Spleen (tissue), 13 donors: ENCODE measurements at regions of chr1 and their contacts with region 1.

Region 1: DNA sequence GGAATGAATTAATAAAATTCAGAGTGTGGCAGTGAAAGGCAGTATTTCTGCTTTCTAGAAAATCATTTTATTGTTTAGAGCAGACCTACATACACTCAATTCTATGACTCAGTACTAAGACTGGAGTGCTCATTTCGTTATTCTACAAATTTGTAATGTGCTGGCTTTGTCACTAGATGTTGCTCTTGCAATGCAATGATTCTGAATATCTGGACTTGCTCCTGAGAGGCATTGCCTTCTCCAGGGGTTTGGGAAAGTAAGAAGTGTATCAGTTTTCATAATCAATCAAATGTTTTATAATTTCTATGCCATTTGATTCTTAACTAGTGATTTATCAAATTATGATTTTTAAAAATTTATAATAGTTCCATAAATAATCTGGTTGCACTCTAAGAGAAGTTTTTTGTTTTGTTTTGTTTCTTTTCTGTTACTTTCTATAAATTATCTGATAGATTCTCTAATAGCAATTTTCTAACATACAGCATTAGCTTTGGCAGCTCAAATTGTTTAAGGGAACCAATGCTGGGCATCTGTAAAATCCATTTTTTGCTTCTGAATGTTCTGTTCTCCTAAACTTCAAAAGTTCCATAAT is 280.5 kb upstream of the SGIP1 start:
- DNase-seq: no peak
- H3K4me3 ChIP-seq: no peak overlapping the region
- H3K27ac ChIP-seq: no peak overlapping the region
- H3K4me1 ChIP-seq: peaks cover 0 to 52% (median 16%) of the 10 kb centered on the region in 6 donors
- H3K27me3 ChIP-seq: no peaks in the 10 kb centered on the region
- CTCF ChIP-seq: peak; percentile 23 to 81 (median 65)
- POLR2A ChIP-seq: no peak

Region 2: DNA sequence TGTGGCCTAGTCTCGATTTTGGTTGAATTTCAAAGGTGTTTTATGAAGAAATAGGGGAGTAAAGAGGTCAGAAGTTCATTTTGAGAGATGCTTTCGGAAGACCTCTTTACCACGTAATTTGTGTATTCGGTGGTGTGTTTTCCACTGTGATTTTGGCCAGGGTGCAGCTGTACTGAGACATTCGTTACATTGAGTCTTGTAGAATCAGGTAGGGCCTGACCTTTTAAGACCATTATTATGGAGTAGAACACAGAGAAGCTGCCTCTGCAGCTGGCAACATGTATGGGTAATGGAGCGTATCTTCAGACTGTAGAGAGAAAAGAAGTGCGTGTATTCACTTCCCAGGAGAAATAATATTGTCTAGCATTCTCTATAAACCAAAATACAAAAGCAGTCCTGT is 134.3 kb before region 1 on chr1:
- intact Hi-C with region 1: no loop called
- DNase-seq: no peak
- H3K4me3 ChIP-seq: no peak overlapping the region
- H3K27ac ChIP-seq: no peak overlapping the region
- H3K4me1 ChIP-seq: no peaks in the 10 kb centered on the region
- H3K27me3 ChIP-seq: no peaks in the 10 kb centered on the region
- CTCF ChIP-seq: no peak
- POLR2A ChIP-seq: no peak

Region 3: DNA sequence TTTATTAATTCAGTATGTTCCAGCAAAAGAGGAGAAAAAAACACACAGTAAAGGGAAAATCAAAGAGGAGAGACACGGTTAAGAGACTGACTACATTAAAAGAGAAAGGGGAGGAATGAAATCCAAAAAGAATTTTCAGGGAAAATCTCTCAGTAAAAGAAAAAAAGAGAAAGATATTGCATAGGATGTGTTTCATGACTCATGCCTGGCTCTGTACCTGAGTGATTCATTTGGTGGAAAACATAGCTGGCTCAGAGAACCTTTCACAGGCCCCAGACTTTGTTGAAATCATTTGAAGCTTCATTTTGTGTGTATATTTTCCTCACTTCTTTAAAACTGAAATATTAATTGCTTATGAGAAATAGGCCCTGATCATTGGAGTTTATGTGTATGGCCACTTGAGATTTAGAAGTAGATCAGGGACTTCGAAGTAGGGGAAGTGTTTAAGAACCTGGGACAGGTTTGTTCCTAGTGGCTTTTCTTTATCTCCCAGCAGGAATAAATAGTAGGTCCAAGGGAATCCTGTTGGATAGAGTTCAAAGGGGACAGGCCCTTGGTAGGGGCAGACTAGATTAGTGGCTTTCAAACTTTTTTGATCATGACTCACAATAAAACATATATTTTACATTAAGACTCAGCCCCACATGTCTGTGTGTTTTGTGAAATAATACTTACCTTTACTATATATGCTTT is 41.4 kb after region 1 on chr1:
- intact Hi-C with region 1: no loop called
- DNase-seq: no peak
- H3K4me3 ChIP-seq: no peak overlapping the region
- H3K27ac ChIP-seq: no peak overlapping the region
- H3K4me1 ChIP-seq: peaks cover 0 to 35% (median 6%) of the 10 kb centered on the region in 6 donors
- H3K27me3 ChIP-seq: no peaks in the 10 kb centered on the region
- CTCF ChIP-seq: no peak
- POLR2A ChIP-seq: no peak

Region 4: DNA sequence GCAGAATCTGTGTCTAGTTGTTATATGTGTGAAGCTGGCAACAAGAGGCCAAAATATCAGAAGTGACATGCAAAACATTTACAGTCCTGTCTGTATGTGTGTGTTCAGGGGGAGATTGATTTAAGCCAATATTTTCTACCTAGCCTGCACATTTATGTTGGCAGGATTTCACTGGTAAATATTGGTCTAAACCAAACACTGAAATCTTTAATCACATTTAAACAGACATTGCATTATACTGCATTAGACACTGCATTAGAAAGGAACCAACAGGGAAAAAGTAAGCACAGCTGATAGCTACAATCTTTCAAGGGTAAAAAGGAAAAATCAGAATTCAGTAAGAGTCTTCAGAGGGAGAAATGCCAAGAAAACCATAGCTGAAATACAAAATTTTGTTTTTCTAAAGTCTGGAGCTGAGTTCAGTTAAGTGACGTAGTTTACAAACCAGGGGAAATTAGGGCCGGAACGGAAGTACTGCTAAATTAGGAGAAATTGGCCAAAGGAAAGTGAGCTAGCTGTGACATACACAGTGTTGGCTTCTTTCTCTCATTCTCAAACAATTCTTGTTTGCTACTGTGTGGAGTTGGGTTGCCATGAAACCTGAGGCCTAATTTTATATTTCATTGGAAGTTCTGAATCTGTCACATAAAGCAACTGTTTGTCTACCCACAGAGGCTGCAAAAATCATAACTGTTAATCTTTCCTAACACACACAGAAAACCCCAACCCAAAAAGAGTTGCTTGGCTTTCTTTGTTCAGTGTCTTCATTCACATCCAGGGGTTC is 63.2 kb after region 1 on chr1:
- intact Hi-C with region 1: no loop called
- DNase-seq: no peak
- H3K4me3 ChIP-seq: no peak overlapping the region
- H3K27ac ChIP-seq: peak overlapping the region in 5 of 8 donors; percentile 19 to 48 (median 36)
- H3K4me1 ChIP-seq: peaks cover 0 to 15% (median 4%) of the 10 kb centered on the region in 6 donors
- H3K27me3 ChIP-seq: no peaks in the 10 kb centered on the region
- CTCF ChIP-seq: no peak
- POLR2A ChIP-seq: no peak

Region 5: DNA sequence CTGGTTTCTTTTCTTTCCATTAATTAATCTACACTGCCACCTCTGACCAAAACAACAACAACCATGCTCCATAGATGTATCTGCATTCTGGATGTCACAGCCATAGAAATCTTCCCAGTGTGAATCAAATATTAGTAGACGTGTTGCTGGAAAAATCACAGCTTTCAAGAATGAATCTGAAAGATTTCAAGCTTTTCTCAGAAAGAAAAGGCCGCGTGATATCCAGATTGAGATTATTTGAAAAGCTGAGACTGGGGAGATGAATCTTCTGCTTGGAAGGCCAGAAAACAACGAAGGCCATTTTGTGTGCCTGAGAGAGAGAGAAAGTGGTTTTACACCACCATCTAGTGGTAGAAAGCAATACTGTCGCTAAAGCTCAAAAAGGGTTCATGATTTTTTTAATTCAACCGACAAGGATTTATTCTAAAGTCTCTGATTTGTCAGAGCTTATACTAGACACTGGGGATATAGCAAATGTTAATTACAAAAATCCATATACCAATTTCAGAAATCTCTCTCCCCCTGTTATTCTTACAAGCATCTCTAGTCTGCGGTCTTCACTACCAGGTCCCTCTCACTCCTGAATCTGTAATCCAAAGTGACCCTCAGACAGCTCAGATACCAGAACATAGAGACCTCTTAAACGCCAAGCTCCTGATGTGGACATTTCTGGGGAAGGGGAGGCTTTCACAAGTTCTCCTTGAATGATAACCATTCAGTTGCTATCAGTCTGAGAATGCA is 193.0 kb after region 1 on chr1:
- intact Hi-C with region 1: loop called (anchors 2 kb)
- DNase-seq: no peak
- H3K4me3 ChIP-seq: peak overlapping the region in 1 of 8 donors; percentile 14
- H3K27ac ChIP-seq: peak overlapping the region in 7 of 8 donors; percentile 47 to 90 (median 81)
- H3K4me1 ChIP-seq: peaks cover 0 to 24% (median 15%) of the 10 kb centered on the region in 6 donors
- H3K27me3 ChIP-seq: no peaks in the 10 kb centered on the region
- CTCF ChIP-seq: peak; percentile 69 to 96 (median 88)
- POLR2A ChIP-seq: no peak

Region 6: GRCh38 chr1:66725885-66726665 is 472.6 kb after region 1 on chr1:
- intact Hi-C with region 1: loop called (anchors 10 kb)
- DNase-seq: peak; percentile 59
- H3K4me3 ChIP-seq: no peak overlapping the region
- H3K27ac ChIP-seq: no peak overlapping the region
- H3K4me1 ChIP-seq: peaks cover 0 to 15% (median 3%) of the 10 kb centered on the region in 6 donors
- H3K27me3 ChIP-seq: peaks cover 0 to 6% (median 0%) of the 10 kb centered on the region in 7 donors
- CTCF ChIP-seq: peak; percentile 23 to 87 (median 72)
- POLR2A ChIP-seq: no peak